Heart right ventricle (tissue), 16 donors: ENCODE measurements at regions of chr11 and their contacts with region 1.

Region 1: GRCh38 chr11:94089341-94089740 is 39.3 kb upstream of the PANX1 start:
- DNase-seq: no peak
- ATAC-seq: no peak
- H3K4me3 ChIP-seq: no peak overlapping the region
- H3K27ac ChIP-seq: no peak overlapping the region
- H3K4me1 ChIP-seq: no peaks in the 10 kb centered on the region
- H3K27me3 ChIP-seq: no peaks in the 10 kb centered on the region
- CTCF ChIP-seq: no peak

Region 2: DNA sequence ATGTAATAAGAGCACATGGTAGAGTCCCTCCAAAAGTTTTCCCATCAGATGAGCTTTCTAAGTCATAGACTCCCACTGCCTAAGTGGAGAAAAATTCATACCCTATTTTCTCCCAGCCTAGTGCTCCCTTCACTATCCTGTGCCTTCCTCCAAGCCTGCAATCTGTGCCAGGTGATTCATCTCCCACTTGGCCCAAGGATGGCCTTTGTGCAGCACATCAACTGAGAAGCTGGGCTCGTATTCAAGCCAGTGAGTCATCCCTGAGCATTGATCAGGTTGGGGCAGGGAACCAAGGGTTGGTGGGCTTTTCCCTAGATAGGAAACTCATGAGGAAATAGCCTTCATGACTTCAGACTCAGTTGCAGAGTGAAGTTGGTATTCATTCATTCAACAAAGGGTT is 103.9 kb after region 1 on chr11:
- intact Hi-C with region 1: loop called in 1 of 10 experiments (anchors 10 kb)
- DNase-seq: no peak
- ATAC-seq: peak in 1 of 8 donors; percentile 44
- H3K4me3 ChIP-seq: no peak overlapping the region
- H3K27ac ChIP-seq: no peak overlapping the region
- H3K4me1 ChIP-seq: no peaks in the 10 kb centered on the region
- H3K27me3 ChIP-seq: no peaks in the 10 kb centered on the region
- CTCF ChIP-seq: no peak